ENCODE measurements at regions of chr19 and their contacts with region 1.

Region 1: GRCh38 chr19:55258828-55259539 is at the start of gene PPP6R1:
- DNase-seq: peak; percentile 95
- H3K4me3 Mint-ChIP-seq: peak within 1 kb of the TSS; percentile 100
- H3K27ac Mint-ChIP-seq: peak within 1 kb of the TSS; percentile 100
- H3K4me1 Mint-ChIP-seq: peaks cover 29% of the 10 kb centered on the region
- H3K27me3 Mint-ChIP-seq: no peaks in the 10 kb centered on the region
- total RNA-seq, gene PPP6R1: 213 to 229 TPM

Region 2: GRCh38 chr19:55189424-55189823 is 69.6 kb before region 1 on chr19:
- CTCF ChIA-PET with region 1: no interaction called
- POLR2A ChIA-PET with region 1: no interaction called
- DNase-seq: no peak
- H3K4me3 Mint-ChIP-seq: no peak overlapping the region
- H3K27ac Mint-ChIP-seq: no peak overlapping the region
- H3K4me1 Mint-ChIP-seq: peaks cover 17% of the 10 kb centered on the region
- H3K27me3 Mint-ChIP-seq: no peaks in the 10 kb centered on the region

Region 3: GRCh38 chr19:55241143-55242088 is 17.6 kb before region 1 on chr19:
- CTCF ChIA-PET with region 1: no interaction called
- POLR2A ChIA-PET with region 1: interaction called, 14 read pairs
- DNase-seq: no peak
- H3K4me3 Mint-ChIP-seq: no peak overlapping the region
- H3K27ac Mint-ChIP-seq: no peak overlapping the region
- H3K4me1 Mint-ChIP-seq: peaks cover 3% of the 10 kb centered on the region
- H3K27me3 Mint-ChIP-seq: no peaks in the 10 kb centered on the region

Region 4: DNA sequence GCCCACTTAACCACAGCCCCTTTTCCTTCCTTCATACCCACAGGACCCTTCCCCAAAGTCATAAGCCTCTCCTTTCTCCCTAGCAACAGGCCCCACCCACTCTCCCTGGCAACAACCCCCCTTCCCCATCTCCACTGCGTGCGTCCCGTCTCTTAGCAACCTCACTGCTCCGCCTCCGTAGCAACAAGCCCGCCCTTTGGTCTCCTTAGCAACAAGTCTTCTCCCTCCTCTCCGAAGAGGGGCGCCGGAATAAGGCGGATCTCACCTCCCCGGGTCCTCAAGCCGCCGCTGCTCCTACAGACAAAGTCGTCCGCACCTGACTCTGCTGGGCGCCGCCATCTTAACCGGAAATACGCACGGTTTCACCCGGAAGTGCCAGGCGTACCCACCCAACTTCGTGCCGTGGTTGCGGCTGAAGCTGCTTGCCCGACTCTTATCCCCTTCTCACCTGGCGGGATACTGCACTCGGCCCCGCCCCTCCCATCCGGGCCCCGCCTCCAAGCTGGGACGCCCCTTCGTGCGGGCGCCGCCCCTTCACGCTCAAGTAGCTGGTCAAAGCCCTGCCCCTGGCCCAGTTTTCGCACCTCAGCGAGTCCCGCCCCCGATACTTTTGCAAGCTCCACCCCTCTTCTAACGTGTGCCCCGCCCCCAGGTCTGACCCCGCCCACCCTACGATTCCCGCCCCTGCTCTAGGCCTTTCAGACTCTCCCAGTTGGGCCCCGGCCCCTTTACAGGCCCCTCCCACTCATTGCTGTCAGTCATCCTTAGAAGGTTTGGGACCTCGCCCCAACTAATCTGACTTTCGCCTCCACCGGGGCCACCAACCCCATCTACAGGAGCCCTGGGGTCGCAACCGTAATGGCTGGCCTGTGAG is 21.0 kb after region 1 on chr19 and contains the start of gene HSPBP1:
- CTCF ChIA-PET with region 1: interaction called, 9 read pairs
- POLR2A ChIA-PET with region 1: interaction called, 96 read pairs
- DNase-seq: peak; percentile 98
- H3K4me3 Mint-ChIP-seq: peak within 1 kb of the TSS; percentile 100
- H3K27ac Mint-ChIP-seq: peak within 1 kb of the TSS; percentile 97
- H3K4me1 Mint-ChIP-seq: peaks cover 57% of the 10 kb centered on the region
- H3K27me3 Mint-ChIP-seq: peaks cover 8% of the 10 kb centered on the region
- total RNA-seq, gene HSPBP1: 28.9 to 29.0 TPM

Region 5: GRCh38 chr19:55301459-55302317 is 42.7 kb after region 1 on chr19:
- CTCF ChIA-PET with region 1: interaction called, 25 read pairs
- POLR2A ChIA-PET with region 1: interaction called, 4 read pairs
- DNase-seq: peak; percentile 94
- H3K4me3 Mint-ChIP-seq: peak overlapping the region; percentile 76
- H3K27ac Mint-ChIP-seq: peak overlapping the region; percentile 73
- H3K4me1 Mint-ChIP-seq: peaks cover 14% of the 10 kb centered on the region
- H3K27me3 Mint-ChIP-seq: peaks cover 2% of the 10 kb centered on the region

Region 6: DNA sequence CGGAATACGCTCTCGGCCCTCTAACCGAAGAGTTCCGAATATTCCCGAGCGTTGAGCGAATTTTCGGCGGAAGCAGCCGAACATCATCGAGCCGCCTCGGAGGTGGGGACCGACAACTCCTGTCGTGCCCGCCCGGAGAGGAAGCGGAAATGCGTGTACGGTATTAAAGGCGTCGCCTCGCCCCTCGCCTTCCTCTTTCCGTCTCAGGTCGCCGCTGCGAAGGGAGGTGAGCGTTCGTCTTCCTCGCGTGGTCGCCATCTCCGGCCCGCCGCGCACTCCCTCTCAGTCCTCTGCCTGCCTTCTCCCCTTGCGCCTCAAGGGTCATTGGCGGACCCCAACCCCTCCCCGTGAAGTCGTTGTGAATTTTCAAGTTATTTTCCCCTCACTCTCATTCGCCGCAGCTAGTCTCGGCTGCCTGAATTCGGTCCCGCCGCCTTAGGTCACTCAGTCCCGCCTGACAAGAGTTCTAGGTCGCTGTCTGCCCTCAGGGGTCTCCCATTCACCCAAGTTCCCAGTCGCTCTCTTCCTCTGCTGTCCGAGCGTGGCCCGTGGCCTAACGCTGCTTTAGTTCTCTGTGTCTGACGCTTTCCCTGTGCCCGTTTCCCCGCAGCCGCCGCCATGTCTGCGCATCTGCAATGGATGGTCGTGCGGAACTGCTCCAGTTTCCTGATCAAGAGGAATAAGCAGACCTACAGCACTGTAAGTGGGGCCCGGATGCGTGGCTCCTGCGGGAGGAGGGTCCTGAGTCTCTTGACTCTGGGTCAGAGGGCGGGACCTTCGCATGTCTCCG is 127.0 kb after region 1 on chr19 and contains the start of gene RPL28:
- CTCF ChIA-PET with region 1: interaction called, 11 read pairs
- POLR2A ChIA-PET with region 1: interaction called, 35 read pairs
- DNase-seq: peak; percentile 99
- H3K4me3 Mint-ChIP-seq: peak within 1 kb of the TSS; percentile 100
- H3K27ac Mint-ChIP-seq: peak within 1 kb of the TSS; percentile 98
- H3K4me1 Mint-ChIP-seq: peaks cover 73% of the 10 kb centered on the region
- H3K27me3 Mint-ChIP-seq: no peaks in the 10 kb centered on the region
- total RNA-seq, gene RPL28: 3,004 to 3,026 TPM

Region 7: GRCh38 chr19:55599468-55600279 is 340.7 kb after region 1 on chr19 and contains the start of gene FIZ1:
- CTCF ChIA-PET with region 1: no interaction called
- POLR2A ChIA-PET with region 1: interaction called, 12 read pairs
- DNase-seq: peak; percentile 97
- H3K4me3 Mint-ChIP-seq: peak within 1 kb of the TSS; percentile 98
- H3K27ac Mint-ChIP-seq: peak within 1 kb of the TSS; percentile 99
- H3K4me1 Mint-ChIP-seq: peaks cover 35% of the 10 kb centered on the region
- H3K27me3 Mint-ChIP-seq: no peaks in the 10 kb centered on the region
- total RNA-seq, gene FIZ1: 10.9 to 11.7 TPM

Measured in activated CD4-positive, alpha-beta memory T cell treated with anti-CD3 and anti-CD28 coated beads, Interleukin-2, amount 10 ng/mL, durations not matched to agents 7 days and 5 days (primary cell).